GM18951 (cell line): ENCODE measurements at regions of chr6 and their contacts with region 1.

Region 1: DNA sequence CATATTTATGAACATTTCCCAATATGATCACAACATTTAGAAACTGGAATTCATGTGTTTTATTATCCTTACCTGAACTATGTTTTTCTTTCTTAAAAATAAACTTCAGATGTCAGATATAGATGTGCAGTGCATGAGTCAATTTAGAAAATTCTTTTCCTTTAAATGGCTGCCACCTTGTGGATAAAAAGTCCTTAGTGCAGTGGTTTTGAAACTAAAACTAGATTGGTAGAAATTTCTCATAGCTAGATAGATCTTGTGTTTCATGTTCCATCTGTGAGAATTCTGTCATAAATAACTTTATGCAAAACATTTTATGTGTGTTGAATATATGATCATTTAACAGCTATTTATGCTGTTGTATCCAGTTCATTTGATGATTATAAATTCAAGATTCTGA is 134.9 kb downstream of the KLHL32 start:
- POLR2A ChIP-seq: no peak

Region 2: DNA sequence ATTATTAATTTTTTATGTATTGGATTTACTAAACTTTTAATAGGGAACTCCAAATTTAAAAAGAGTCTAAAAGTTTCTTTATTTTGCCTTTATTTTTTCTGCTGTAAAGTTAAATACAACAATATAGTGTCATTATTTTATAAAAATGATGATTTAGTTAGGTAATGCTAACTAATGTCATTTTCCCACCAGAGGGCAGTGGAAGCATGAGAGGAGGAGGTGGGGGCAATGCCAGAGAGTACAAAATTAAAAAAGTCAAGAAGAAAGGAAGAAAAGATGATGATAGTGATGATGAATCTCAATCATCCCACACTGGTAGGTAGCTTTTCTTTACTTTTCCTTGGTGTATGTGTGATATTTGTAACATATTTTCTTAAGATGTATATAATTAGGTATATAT is 516.8 kb before region 1 on chr6:
- in situ Hi-C with region 1: loop called (anchors 25 kb)
- POLR2A ChIP-seq: no peak

Region 3: GRCh38 chr6:96626759-96627364 is 432.6 kb before region 1 on chr6:
- in situ Hi-C with region 1: loop called (anchors 10 kb)
- POLR2A ChIP-seq: no peak

Region 4: DNA sequence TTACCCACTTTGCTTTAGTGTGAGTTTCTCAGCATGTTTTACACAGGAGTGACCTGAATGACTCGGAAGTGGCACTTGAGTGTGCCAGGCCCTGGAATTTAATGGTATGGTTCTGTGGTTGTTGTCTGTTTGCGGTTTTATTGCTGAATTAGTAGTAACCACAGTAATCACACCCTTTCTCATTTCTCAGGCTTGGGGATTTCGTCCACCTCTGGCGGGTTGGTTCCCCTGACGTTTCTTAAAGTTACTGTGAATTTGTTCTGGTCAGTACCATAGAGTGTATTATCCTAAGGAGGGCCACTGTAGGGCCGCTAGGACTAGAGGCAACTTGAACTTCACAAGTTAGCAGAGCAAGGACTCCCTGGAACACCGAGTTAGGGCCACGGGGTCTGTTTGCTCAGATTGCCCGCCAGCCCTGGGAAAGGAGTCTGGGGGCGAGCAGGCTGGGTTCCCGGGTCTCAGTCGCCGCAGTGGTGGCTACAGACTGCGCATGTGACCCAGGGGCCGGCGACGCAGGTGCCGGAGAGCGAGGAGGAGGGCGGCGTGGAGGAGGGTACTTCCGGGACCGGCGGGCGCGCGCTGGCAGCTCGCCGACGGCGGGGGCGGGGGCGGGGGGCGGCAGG is 135.5 kb before region 1 on chr6:
- in situ Hi-C with region 1: loop called (anchors 10 kb)
- POLR2A ChIP-seq: peak; percentile 71